Dendritic cell treated with granulocyte-macrophage colony-stimulating factor and Interleukin-4, amounts not matched to agents 40 ng/mL and 50 ng/mL, for 4 days (primary cell): ENCODE measurements at regions of chr1 and their contacts with region 1.

Region 1: GRCh38 chr1:43367904-43368645 is at the start of gene ELOVL1:
- H3K4me3 Mint-ChIP-seq: peak within 1 kb of the TSS; percentile 98
- H3K27ac Mint-ChIP-seq: peak within 1 kb of the TSS; percentile 99
- H3K4me1 Mint-ChIP-seq: peaks cover 56% of the 10 kb centered on the region
- H3K27me3 Mint-ChIP-seq: no peaks in the 10 kb centered on the region

Region 2: DNA sequence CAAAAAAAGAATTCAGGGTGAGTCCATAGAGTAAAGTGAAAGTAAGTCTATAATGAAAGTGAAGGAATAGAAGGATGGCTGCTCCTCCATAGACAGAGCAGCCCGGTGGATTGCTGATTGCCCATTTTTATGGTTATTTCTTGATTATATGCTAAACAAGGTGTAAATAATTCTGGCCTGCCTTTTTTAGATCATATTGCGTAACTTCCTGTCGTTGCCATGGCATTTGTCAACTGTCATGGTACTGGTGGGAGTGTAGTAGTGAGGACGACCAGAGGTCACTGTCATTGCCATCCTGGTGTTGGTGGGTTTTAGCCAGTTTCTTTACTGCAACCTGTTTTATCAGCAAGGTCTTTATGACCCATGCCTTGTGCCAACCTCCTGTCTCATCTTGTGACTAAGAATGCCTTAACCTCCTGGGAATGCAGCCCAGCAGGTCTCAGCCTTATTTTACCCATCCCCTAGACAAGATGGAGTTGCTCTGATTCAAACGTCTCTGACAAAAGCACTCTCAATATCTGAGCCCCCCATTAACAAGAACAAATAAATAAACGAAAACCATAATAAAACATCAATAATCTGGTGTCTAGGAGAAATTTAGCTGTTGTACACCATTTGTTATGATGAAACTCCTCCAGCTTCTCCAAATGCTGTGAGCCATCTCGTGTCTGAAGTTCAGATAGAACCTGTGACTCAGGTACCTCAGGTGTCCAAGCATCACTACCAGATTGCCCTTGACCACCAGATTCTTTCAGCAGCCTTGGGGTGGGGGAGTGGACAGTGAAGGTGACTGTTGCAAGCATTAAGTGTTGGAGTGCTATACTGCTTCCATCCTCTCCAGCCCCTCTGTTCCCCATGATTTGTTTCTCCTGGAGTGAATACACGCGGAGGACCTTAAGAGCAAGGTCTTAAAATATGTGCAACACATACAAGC is 232.0 kb before region 1 on chr1:
- intact Hi-C with region 1: no loop called
- H3K4me3 Mint-ChIP-seq: no peak overlapping the region
- H3K27ac Mint-ChIP-seq: no peak overlapping the region
- H3K4me1 Mint-ChIP-seq: no peaks in the 10 kb centered on the region
- H3K27me3 Mint-ChIP-seq: peaks cover 5% of the 10 kb centered on the region

Region 3: DNA sequence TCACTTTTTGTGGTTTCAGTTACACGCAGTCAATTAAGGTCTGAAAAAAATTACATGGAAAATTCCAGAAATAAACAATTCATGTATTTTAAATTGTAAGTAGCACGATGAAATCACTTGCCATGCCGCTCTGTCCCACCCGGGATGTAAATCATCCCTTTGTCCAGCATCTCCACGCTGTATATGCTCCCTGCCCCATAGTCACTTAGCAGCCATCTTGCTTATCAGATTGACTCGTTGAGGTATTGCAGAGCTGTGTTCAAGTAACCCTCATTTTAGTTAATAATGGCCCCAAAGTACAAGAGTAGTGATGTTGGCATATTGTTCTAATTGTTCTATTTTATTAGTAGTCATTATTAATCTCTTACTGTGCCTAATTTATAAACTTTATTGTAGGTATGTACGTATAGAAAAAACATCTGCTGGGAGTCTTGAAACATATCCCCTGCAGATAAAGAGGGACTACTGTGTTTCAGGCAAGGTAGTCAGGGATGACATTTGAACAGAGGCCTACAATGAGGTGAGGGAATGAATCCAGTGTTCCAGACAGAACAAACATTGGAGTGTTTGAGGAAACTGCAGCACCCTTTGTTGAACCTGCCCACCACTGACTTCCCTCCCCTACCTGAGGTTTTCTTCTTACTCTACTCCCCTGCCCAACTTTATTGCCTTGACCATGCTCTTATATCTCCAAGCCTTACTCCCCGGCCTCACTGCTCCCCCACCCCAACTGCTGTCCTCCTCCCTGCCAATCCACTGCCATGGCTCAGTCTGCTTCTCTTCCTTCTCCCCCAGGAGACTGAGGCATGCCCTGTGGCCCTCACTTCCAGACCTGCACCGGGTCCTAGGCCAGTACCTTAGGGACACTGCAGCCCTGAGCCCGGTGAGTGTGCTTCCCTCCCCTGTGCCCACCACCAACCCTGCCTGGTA is 16.4 kb before region 1 on chr1:
- intact Hi-C with region 1: no loop called
- H3K4me3 Mint-ChIP-seq: no peak overlapping the region
- H3K27ac Mint-ChIP-seq: peak overlapping the region; percentile 48
- H3K4me1 Mint-ChIP-seq: peaks cover 26% of the 10 kb centered on the region
- H3K27me3 Mint-ChIP-seq: no peaks in the 10 kb centered on the region

Region 4: DNA sequence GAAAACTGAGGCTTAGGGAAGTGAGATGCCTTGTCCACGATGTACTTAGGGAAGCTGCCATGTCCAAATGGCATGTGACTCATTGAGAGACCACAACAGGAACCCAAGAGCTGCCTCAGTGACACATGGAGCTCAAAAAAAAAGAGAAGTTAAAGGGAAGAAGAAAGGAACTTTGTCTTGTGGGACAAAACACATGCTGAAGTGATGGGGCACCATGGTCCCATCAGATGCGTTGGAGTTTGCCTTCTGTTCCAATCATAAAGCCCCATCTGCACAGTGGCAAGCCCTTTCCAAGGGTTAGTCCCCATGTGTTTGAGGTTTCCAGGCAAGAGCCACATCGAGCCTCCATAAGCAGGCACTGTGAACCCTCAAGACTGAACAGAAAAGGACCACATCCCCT is 13.5 kb after region 1 on chr1:
- intact Hi-C with region 1: loop called (anchors 1 kb)
- H3K4me3 Mint-ChIP-seq: no peak overlapping the region
- H3K27ac Mint-ChIP-seq: peak overlapping the region; percentile 87
- H3K4me1 Mint-ChIP-seq: peaks cover 73% of the 10 kb centered on the region
- H3K27me3 Mint-ChIP-seq: no peaks in the 10 kb centered on the region

Region 5: GRCh38 chr1:43452789-43453445 is 84.8 kb after region 1 on chr1:
- intact Hi-C with region 1: no loop called
- H3K4me3 Mint-ChIP-seq: peak overlapping the region; percentile 54
- H3K27ac Mint-ChIP-seq: no peak overlapping the region
- H3K4me1 Mint-ChIP-seq: peaks cover 18% of the 10 kb centered on the region
- H3K27me3 Mint-ChIP-seq: peaks cover 14% of the 10 kb centered on the region